Right cardiac atrium (tissue), 5 donors: ENCODE measurements at regions of chr5 and their contacts with region 1.

Region 1: GRCh38 chr5:42767491-42768105 is 11.0 kb downstream of the CCDC152 start:
- DNase-seq: no peak
- ATAC-seq: no peak
- H3K4me3 ChIP-seq: no peak overlapping the region
- H3K27ac ChIP-seq: no peak overlapping the region
- H3K4me1 ChIP-seq: no peaks in the 10 kb centered on the region
- H3K27me3 ChIP-seq: no peaks in the 10 kb centered on the region

Region 2: DNA sequence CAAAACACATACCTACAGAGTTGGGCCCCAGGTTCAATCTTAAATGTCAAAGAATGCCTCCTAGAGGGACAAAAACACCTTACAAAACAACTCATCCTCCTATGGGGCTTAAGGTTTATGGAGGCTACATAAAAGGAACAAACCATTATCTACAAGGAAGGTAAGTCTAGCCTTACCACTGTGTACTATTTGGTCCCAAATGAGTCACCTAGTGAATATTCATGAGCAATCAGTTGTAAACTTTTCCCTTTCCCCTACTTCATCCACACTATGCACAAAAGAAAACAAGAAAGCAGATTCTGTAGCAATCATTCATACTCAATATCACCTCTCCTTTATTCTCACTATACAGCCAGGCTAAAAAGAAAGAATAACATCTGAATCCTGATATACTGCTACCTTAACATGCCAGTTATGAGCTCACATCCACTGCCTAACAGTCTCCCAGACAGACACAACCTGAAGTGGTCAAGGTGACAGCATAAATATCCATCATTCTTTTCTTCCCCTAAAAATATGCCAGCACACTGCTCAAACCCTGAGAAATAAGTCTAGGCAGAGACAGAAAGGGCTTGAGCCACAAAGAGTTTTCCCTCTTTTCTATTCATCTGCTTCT is 903.6 kb before region 1 on chr5:
- intact Hi-C with region 1: loop called (anchors 5 to 10 kb)
- DNase-seq: no peak
- ATAC-seq: no peak
- H3K4me3 ChIP-seq: no peak overlapping the region
- H3K27ac ChIP-seq: no peak overlapping the region
- H3K4me1 ChIP-seq: peaks cover under 1% of the 10 kb centered on the region
- H3K27me3 ChIP-seq: no peaks in the 10 kb centered on the region

Region 3: DNA sequence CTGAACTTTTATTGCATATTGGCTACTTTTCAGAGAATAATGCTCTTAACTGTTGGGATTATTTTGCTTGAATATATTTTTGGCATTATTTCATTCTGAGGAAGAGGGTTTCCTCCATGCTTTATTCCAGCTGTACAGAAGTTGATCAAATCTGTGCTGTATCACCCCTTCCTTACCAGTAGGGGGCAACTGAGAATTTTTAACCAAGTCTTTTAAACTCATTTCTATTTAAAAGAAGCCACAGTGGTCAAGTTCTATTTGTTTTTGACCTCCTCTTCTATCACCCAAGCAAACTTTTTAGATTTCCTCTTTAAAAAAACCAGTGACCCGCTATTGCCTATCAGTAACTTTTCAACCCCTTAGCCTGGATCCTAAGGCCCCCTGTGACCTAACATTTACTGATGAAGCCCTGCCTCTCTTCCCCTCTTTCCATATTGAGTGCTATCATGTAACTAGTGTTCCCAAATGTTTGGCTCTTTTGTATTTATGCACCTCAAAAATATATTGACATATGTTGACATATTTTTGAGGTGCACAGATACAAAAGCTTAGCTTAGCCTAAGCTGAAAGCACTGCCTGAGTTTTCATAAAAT is 761.9 kb before region 1 on chr5:
- intact Hi-C with region 1: loop called in 2 of 4 experiments (anchors 10 kb)
- DNase-seq: no peak
- ATAC-seq: no peak
- H3K4me3 ChIP-seq: no peak overlapping the region
- H3K27ac ChIP-seq: no peak overlapping the region
- H3K4me1 ChIP-seq: no peaks in the 10 kb centered on the region
- H3K27me3 ChIP-seq: no peaks in the 10 kb centered on the region

Region 4: GRCh38 chr5:42889311-42889933 is 121.8 kb after region 1 on chr5:
- intact Hi-C with region 1: loop called in 1 of 4 experiments (anchors 10 kb)
- DNase-seq: peak; percentile 69 to 87 (median 79)
- ATAC-seq: peak; percentile 90 to 91
- H3K4me3 ChIP-seq: no peak overlapping the region
- H3K27ac ChIP-seq: no peak overlapping the region
- H3K4me1 ChIP-seq: no peaks in the 10 kb centered on the region
- H3K27me3 ChIP-seq: no peaks in the 10 kb centered on the region